ENCODE measurements at regions of chr3 and their contacts with region 1.

Region 1: GRCh38 chr3:66938338-66938963 is 59.7 kb upstream of the KBTBD8 start:
- DNase-seq: peak in 7 of 9 donors; percentile 10 to 46 (median 38)
- ATAC-seq: peak; percentile 54
- H3K4me3 ChIP-seq: no peak overlapping the region
- H3K4me3 Mint-ChIP-seq: no peak overlapping the region
- H3K27ac ChIP-seq: no peak overlapping the region
- H3K27ac Mint-ChIP-seq: no peak overlapping the region
- H3K4me1 ChIP-seq: no peaks in the 10 kb centered on the region
- H3K4me1 Mint-ChIP-seq: no peaks in the 10 kb centered on the region
- H3K27me3 ChIP-seq: no peaks in the 10 kb centered on the region
- H3K27me3 Mint-ChIP-seq: peaks cover 7 to 35% (median 22%) of the 10 kb centered on the region in 5 donors

Region 2: DNA sequence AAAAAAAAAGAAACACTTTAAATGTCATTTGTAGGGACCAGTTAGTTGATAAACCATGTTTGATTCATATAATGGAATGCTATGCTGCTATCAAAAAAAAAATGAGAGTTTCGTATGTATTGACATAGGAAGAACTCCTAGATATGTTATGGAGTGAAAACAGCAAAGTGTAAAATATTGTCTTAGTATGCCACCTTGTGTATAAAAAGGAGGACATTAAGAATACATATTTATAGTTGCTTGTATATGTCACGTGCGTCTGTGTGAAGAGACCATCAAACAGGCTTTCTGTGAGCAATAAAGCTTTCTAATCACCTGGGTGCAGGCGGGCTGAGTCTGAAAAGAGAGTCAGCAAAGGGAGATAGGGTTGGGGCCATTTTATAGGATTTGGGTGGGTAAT is 99.2 kb after region 1 on chr3:
- CTCF ChIA-PET with region 1: no interaction called
- POLR2A ChIA-PET with region 1: no interaction called
- intact Hi-C with region 1: loop called in 1 of 2 experiments (anchors 1 kb)
- DNase-seq: peak in 2 of 9 donors; percentile 1 to 11
- ATAC-seq: no peak
- H3K4me3 ChIP-seq: no peak overlapping the region
- H3K4me3 Mint-ChIP-seq: no peak overlapping the region
- H3K27ac ChIP-seq: no peak overlapping the region
- H3K27ac Mint-ChIP-seq: no peak overlapping the region
- H3K4me1 ChIP-seq: no peaks in the 10 kb centered on the region
- H3K4me1 Mint-ChIP-seq: no peaks in the 10 kb centered on the region
- H3K27me3 ChIP-seq: no peaks in the 10 kb centered on the region
- H3K27me3 Mint-ChIP-seq: no peaks in the 10 kb centered on the region

Region 3: GRCh38 chr3:68893600-68894239 is 1955.3 kb after region 1 on chr3:
- CTCF ChIA-PET with region 1: interaction called, 12 read pairs
- POLR2A ChIA-PET with region 1: no interaction called
- intact Hi-C with region 1: loop called (anchors 1 to 2 kb)
- DNase-seq: peak in 7 of 9 donors; percentile 3 to 42 (median 24)
- ATAC-seq: no peak
- H3K4me3 ChIP-seq: no peak overlapping the region
- H3K4me3 Mint-ChIP-seq: no peak overlapping the region
- H3K27ac ChIP-seq: no peak overlapping the region
- H3K27ac Mint-ChIP-seq: no peak overlapping the region
- H3K4me1 ChIP-seq: no peaks in the 10 kb centered on the region
- H3K4me1 Mint-ChIP-seq: no peaks in the 10 kb centered on the region
- H3K27me3 ChIP-seq: no peaks in the 10 kb centered on the region
- H3K27me3 Mint-ChIP-seq: peaks cover 5 to 20% (median 6%) of the 10 kb centered on the region in 5 donors

Measured in naive thymus-derived CD4-positive, alpha-beta T cell (primary cell).